ENCODE measurements at regions of chr9 and their contacts with region 1.

Region 1: GRCh38 chr9:100756221-100756620 is 178.3 kb downstream of the CAVIN4 start:
- DNase-seq: no peak
- ATAC-seq: no peak
- H3K4me3 ChIP-seq: no peak overlapping the region
- H3K4me3 Mint-ChIP-seq: no peak overlapping the region
- H3K27ac ChIP-seq: no peak overlapping the region
- H3K27ac Mint-ChIP-seq: no peak overlapping the region
- H3K4me1 ChIP-seq: no peaks in the 10 kb centered on the region
- H3K4me1 Mint-ChIP-seq: no peaks in the 10 kb centered on the region
- H3K27me3 ChIP-seq: no peaks in the 10 kb centered on the region
- H3K27me3 Mint-ChIP-seq: no peaks in the 10 kb centered on the region
- CTCF ChIP-seq: no peak

Region 2: DNA sequence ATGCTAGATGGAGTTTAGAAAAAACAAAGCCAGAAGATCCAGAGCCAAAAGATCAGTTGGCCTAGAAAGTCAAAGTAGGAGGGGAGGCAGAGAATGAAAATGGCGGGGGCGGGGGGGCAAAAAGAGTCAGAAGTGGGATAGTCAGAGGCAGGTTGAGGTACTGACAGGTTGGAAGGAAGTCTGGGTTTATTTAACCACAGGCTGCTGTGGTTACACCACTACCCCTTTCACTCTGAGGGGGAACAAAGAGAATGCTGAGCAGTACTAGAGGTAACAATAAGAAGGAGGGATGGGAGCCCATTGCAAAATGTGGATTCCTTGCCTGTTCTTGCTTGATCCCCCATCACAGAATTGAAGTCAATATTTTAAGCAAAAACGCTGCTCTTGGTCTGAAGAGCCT is 66.6 kb before region 1 on chr9:
- intact Hi-C with region 1: loop called (anchors 10 kb)
- DNase-seq: no peak
- ATAC-seq: no peak
- H3K4me3 ChIP-seq: no peak overlapping the region
- H3K4me3 Mint-ChIP-seq: no peak overlapping the region
- H3K27ac ChIP-seq: no peak overlapping the region
- H3K27ac Mint-ChIP-seq: no peak overlapping the region
- H3K4me1 ChIP-seq: no peaks in the 10 kb centered on the region
- H3K4me1 Mint-ChIP-seq: no peaks in the 10 kb centered on the region
- H3K27me3 ChIP-seq: no peaks in the 10 kb centered on the region
- H3K27me3 Mint-ChIP-seq: peaks cover 9 to 17% of the 10 kb centered on the region in 2 donors
- CTCF ChIP-seq: no peak

Region 3: GRCh38 chr9:101081641-101082040 is 325.4 kb after region 1 on chr9:
- intact Hi-C with region 1: no loop called
- DNase-seq: no peak
- ATAC-seq: no peak
- H3K4me3 ChIP-seq: no peak overlapping the region
- H3K4me3 Mint-ChIP-seq: no peak overlapping the region
- H3K27ac ChIP-seq: no peak overlapping the region
- H3K27ac Mint-ChIP-seq: no peak overlapping the region
- H3K4me1 ChIP-seq: no peaks in the 10 kb centered on the region
- H3K4me1 Mint-ChIP-seq: no peaks in the 10 kb centered on the region
- H3K27me3 ChIP-seq: no peaks in the 10 kb centered on the region
- H3K27me3 Mint-ChIP-seq: no peaks in the 10 kb centered on the region
- CTCF ChIP-seq: no peak